Right ventricle myocardium inferior (tissue), 1 donor: ENCODE measurements at regions of chr10 and their contacts with region 1.

Region 1: DNA sequence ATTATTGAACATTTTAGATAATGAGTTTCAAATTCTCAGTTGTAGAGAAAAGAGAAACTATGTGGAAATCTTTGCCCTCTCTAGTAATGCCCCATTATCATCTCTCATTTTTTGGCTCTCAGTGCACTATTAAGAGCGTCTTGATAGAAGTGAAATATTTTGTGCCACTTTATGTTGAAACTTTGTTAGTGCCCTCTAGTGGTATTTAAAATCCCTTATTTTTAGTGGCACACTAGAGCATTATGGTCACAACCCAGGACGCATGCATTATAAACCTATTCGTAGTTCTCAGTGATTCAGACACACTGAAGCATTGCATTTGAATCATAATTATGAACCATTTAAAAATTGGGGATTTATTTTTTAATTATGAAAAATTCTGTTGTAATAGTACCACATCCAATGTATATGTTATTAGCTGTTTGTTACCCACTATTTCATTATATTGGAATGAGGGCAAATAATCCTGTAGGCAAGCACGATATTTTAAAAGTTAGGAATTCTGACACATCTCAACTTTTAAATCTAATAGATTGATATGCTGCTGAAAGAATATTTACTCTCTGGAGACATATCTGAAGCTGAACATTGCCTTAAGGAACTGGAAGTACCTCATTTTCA is 21.9 kb downstream of the PDCD4 start:
- DNase-seq: no peak
- ATAC-seq: peak; percentile 74

Region 2: DNA sequence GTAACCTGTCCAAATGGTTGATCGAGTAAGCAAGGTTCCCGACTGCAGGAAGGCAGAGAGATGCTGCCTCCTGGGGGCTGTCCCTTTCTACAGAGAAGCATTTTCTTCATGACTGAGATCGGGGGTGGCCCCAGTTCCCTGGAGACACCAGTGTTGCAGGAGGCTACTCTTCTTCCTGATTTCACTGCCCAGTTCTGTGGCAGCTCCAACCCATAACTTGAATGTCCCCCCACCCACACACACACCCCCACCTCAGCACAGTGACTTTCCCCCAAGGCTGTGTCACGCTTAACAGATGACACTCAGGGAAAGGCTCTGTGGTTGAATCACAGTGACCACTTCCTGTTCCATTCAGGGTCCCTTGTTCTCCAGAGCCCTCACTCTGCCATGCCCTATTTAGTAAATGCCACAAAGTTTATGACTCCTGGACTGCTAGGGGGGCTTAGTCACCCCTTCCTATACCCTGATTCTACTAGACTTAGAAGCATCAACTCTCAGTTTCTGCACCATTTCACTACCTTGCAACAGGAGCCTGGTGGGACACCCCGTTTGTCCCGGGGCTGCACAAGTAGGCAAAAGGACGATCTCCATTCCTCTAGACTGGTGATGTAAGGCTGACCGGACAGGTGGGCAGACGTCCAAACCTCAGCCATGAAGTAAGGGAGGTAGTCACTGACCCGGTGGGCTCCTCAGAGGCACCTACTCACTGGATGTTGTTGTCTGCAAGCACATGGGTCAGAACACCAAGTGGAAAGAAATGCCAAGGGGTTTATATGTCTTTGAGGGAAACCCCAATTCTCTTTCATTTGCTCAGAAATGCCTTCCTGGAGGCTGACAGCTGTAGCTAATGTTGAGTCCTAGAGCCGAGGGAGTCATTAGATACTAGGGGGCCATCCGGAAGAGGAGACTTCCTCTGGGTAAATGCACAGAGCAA is 357.4 kb before region 1 on chr10:
- intact Hi-C with region 1: no loop called
- DNase-seq: no peak
- ATAC-seq: peak; percentile 70

Region 3: GRCh38 chr10:110610308-110610774 is 283.3 kb before region 1 on chr10:
- intact Hi-C with region 1: loop called (anchors 5 kb)
- DNase-seq: no peak
- ATAC-seq: peak; percentile 62

Region 4: DNA sequence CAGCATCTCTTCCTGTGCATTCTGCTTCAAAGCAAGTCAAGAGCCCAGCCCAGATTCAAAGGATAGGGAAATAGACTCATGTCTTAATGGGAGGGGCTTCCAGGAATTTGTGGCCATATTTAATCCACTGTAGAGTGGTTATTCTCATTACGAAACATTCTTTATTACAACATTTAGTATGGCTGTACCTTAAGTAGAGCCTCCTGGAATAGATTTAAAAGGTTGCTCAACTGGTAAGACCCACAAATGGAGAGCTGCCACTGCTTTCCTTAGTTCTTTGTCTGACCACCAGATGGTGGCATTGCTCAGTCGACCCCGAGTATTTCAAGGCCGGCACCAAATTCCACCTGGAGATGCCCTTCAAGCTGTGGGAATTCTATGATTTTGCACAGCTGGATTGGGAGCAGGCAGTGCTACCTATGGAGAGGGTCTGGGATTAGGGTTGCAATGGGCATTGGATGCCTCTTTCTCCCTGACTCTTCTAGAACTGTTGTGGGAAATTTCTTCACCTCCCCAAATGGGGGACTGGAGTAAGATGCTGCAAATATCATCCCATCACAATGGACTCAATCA is 147.3 kb before region 1 on chr10:
- intact Hi-C with region 1: loop called (anchors 2 kb)
- DNase-seq: no peak
- ATAC-seq: peak; percentile 46

Region 5: DNA sequence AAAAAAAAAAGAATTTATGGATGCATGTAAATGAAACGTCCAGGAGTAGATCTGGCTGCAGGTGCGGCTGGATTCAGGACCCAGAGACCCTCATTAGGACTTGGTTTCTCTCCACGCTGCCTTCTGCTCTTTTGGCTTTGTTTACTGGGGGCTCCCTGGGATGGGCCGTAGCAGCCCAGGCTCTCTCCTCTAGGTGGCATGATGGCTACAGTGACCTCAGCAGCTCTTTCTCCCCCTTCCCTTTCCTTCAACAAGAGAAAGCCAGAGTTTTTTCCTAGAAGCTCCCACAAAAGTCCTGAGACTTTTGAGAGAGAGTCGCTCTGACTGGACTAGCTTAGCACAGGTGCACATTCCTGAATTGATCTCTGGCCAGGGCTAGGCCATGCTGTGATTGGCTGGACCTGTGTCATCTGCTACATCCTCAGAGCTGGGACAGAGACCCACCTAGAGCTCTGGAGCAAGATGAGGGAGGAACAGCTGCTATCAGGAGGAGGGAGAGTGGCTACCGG is 89.8 kb before region 1 on chr10:
- intact Hi-C with region 1: loop called (anchors 2 kb)
- DNase-seq: no peak
- ATAC-seq: peak; percentile 70

Region 6: GRCh38 chr10:110834629-110835301 is 58.9 kb before region 1 on chr10:
- intact Hi-C with region 1: no loop called
- DNase-seq: peak; percentile 74
- ATAC-seq: peak; percentile 79

Region 7: DNA sequence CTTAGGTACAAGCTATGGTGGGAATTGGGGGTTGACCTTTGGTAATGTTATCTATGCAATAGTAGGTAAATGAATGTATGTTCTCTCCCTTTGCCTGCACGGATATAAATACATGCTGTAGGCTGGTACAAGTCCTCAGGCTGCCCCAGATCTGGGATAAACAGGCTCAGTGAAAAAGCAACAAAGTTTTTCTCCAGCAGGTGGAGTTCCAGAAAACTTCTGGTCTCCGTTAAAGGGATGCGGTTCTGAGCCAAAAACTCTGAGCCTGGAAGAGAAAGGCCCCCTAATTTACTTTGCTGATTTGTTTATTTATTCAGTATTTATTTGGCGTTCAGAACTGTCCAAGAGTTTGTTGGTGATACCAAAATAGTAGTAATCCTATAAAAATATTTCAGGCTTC is 387.8 kb after region 1 on chr10:
- intact Hi-C with region 1: no loop called
- DNase-seq: no peak
- ATAC-seq: no peak